AG04449 (cell line): ENCODE measurements at regions of chr1 and their contacts with region 1.

Region 1: GRCh38 chr1:172398970-172399755 is 21.3 kb upstream of the C1orf105 start:
- DNase-seq: peak; percentile 89
- H3K4me3 ChIP-seq: no peak overlapping the region
- CTCF ChIP-seq: peak; percentile 23

Region 2: GRCh38 chr1:172002725-172003345 is 396.3 kb before region 1 on chr1:
- CTCF ChIA-PET with region 1: interaction called, 69 read pairs
- POLR2A ChIA-PET with region 1: no interaction called
- DNase-seq: no peak
- H3K4me3 ChIP-seq: no peak overlapping the region
- CTCF ChIP-seq: peak; percentile 56

Region 3: GRCh38 chr1:172144445-172145061 is 254.6 kb before region 1 on chr1:
- CTCF ChIA-PET with region 1: interaction called, 11 read pairs
- POLR2A ChIA-PET with region 1: interaction called, 11 read pairs
- DNase-seq: peak; percentile 97
- H3K4me3 ChIP-seq: peak overlapping the region; percentile 80
- CTCF ChIP-seq: no peak

Region 4: DNA sequence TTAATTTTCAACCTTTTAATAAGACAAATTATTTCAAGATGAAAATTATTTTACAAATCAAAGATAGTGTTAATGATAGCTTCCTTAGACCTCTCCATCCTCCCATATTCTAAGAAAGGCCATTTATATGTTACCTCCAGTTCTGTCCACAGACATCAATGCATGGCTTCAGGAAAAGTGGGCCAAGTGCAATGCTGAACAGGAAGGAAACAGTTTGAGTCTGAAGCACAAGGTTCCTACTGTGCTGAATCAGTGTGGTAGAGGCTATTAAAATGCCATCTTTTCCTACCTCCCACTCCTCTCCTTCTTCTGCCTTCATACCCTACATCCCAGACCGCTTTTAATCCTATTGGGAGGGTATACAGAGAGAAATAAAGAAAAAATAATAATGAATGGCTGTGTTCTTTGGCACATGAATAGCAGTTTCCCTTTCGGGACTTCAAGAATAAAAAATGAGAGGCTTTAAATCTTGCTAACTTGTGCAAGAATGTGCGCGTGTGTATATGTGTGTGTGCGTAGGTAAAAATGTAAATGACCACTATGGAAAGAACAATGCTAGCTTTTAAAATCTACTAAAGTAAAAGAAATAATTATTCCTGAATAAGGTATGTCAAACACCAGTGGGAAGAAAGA is 41.3 kb before region 1 on chr1:
- CTCF ChIA-PET with region 1: interaction called, 9 read pairs
- POLR2A ChIA-PET with region 1: interaction called, 15 read pairs
- DNase-seq: no peak
- H3K4me3 ChIP-seq: no peak overlapping the region
- CTCF ChIP-seq: no peak

Region 5: DNA sequence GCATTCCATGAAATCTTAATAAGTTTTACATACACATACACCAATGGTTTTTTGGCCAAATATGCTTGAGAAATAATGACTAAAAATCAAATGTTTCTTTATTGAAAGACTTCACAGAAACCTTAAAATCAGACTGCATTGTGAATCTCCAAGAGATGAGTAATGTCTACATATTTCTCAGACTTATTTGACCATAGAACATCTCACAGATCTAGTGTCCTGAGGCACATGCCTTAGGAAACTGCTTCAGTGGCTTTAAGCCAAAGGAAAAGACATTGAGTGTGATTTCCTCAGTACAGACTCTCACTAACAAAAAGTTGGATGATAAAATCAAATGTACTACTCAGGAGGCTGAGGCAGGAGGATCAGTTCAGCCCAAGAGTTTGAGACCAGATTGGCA is 15.2 kb after region 1 on chr1:
- CTCF ChIA-PET with region 1: interaction called, 17 read pairs
- POLR2A ChIA-PET with region 1: no interaction called
- DNase-seq: no peak
- H3K4me3 ChIP-seq: no peak overlapping the region
- CTCF ChIP-seq: no peak